ENCODE measurements at regions of chr3 and their contacts with region 1.

Region 1: DNA sequence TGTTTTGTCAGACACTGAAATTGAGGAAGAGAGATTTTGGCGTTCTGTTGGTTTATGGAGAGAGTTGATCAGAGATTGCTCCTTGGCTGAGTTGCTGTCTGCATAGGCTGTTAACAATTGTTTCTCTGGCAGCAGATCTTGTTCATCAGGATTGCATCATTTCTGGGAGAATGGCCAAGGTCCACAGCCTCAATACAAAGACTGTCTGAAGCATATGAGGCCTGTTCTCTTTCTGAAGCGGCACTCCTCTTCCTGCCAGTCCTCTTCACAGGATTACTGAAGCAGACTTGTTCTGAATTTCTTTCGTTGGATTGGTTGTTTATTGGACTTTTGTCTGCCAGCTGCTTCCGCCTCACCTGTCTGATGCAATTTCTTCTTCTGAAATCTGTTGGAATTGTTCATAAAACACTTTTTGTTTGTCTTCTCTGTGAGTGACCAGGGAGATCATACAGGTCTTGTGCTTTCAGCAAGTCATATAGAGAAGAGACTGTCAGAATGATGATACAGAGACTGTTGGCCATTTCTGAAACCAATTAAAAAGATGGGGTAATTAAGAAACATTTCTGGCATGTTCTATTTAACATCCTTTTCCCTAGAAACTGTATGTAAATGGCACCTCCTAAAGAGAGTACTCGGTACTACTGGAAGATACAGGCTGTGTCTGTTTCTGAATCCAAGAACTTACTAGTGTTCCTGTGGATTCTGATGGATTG is 25.5 kb downstream of the SETD5 start:
- DNase-seq: peak; percentile 63
- ATAC-seq: peak; percentile 96

Region 2: GRCh38 chr3:9352917-9353752 is 69.7 kb before region 1 on chr3:
- intact Hi-C with region 1: loop called (anchors 5 kb)
- DNase-seq: no peak
- ATAC-seq: peak; percentile 71

Region 3: GRCh38 chr3:9396700-9397521 is 26.0 kb before region 1 on chr3:
- intact Hi-C with region 1: loop called (anchors 1 kb)
- DNase-seq: peak; percentile 99
- ATAC-seq: peak; percentile 89

Region 4: DNA sequence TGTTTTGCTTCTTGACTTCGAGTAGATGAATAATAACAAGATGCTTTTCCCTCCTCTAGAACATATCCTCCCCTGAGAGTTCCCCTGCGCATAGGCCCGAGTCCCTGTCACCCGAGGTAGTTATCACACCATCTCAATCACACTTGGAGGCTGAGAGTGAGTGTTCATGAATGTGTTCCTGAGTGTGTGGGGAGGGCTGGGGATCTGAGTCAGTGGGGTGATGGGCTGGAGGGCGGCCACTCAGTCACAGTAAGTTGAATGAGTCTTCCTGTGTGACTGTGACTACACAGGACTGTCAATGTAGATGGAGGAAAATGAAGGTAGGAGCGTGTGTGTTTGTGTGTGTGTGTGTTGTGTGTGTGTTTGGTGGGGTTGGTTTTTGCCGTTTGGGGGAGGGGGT is 45.6 kb after region 1 on chr3:
- intact Hi-C with region 1: no loop called
- DNase-seq: no peak
- ATAC-seq: no peak